ENCODE measurements at regions of chr2 and their contacts with region 1.

Region 1: GRCh38 chr2:69914170-69914960 is 544 bp upstream of the MXD1 start:
- DNase-seq: peak; percentile 100
- H3K4me3 Mint-ChIP-seq: peak overlapping the region; percentile 78
- H3K27ac Mint-ChIP-seq: peak overlapping the region; percentile 46
- H3K4me1 Mint-ChIP-seq: peaks cover 24% of the 10 kb centered on the region
- H3K27me3 Mint-ChIP-seq: no peaks in the 10 kb centered on the region
- CTCF ChIP-seq: no peak

Region 2: GRCh38 chr2:69741619-69742466 is 172.5 kb before region 1 on chr2 and contains the start of gene ANXA4:
- CTCF ChIA-PET with region 1: interaction called, 3 read pairs
- POLR2A ChIA-PET with region 1: interaction called, 19 read pairs
- intact Hi-C with region 1: no loop called
- DNase-seq: peak; percentile 91
- H3K4me3 Mint-ChIP-seq: peak within 1 kb of the TSS; percentile 83
- H3K27ac Mint-ChIP-seq: peak within 1 kb of the TSS; percentile 97
- H3K4me1 Mint-ChIP-seq: peaks cover 14% of the 10 kb centered on the region
- H3K27me3 Mint-ChIP-seq: no peaks in the 10 kb centered on the region
- CTCF ChIP-seq: no peak
- total RNA-seq, gene ANXA4: 79.8 and 82.9 TPM in 2 replicates

Region 3: DNA sequence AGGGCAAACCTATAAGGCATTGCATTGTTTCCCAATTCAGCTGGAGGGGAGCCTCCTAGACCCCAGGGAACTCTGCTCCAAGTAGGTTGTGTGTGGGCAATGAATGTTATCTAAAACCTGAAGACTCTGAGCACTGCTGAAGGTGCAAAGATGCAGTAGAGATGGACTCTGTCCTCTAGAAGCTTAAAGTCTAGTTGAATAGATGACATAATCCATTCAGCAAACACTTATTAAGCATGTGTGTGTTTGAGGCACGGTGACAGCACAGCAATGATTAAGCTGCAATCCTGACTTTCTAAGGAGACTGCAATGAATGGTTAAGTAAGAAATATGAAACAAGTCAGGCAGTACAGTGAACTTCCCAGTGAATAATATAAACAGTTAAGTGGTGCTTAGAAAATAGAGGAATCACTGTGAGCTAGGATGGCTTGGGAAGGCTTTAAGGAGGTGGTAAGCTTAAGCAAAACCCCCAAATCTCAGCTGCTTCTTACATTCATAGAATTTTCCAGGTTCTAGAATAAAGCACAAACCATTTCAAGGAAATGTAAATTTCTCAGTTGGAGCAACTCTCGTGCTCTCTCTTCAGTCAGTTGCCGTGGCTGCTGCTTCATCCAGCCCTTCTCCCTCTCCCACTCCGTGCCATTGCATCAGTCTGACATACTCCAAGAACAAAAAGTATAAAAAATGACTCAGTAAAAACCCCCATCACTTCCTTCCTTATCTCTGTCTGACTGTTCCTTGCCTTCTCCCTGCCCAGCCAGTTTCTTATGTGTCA is 19.7 kb after region 1 on chr2:
- CTCF ChIA-PET with region 1: no interaction called
- POLR2A ChIA-PET with region 1: interaction called, 26 read pairs
- intact Hi-C with region 1: loop called (anchors 2 kb)
- DNase-seq: peak; percentile 65
- H3K4me3 Mint-ChIP-seq: no peak overlapping the region
- H3K27ac Mint-ChIP-seq: peak overlapping the region; percentile 5
- H3K4me1 Mint-ChIP-seq: peaks cover 21% of the 10 kb centered on the region
- H3K27me3 Mint-ChIP-seq: no peaks in the 10 kb centered on the region
- CTCF ChIP-seq: no peak

Region 4: DNA sequence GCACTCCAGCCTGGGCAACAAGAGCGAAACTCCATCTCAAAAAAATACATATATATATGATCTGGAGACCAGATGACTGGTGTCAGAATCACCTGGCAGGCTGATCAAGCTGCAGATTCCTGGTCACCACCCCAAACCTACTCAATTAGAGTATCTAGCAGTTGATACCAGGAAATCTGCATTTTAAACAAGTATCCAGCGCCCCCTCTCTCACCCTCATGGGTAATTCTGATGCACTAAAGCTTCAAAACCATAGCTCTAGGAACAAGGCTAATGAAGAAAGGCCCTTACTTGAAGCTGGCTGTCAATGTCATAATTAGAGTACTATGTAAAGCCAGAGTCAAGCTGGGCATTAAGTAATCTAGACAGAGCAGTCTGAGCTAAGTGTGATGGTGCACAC is 147.9 kb after region 1 on chr2:
- CTCF ChIA-PET with region 1: interaction called, 11 read pairs
- POLR2A ChIA-PET with region 1: interaction called, 191 read pairs
- intact Hi-C with region 1: no loop called
- DNase-seq: peak; percentile 16
- H3K4me3 Mint-ChIP-seq: no peak overlapping the region
- H3K27ac Mint-ChIP-seq: peak overlapping the region; percentile 79
- H3K4me1 Mint-ChIP-seq: no peaks in the 10 kb centered on the region
- H3K27me3 Mint-ChIP-seq: no peaks in the 10 kb centered on the region
- CTCF ChIP-seq: no peak

Region 5: GRCh38 chr2:70132244-70133126 is 218.1 kb after region 1 on chr2:
- CTCF ChIA-PET with region 1: interaction called, 5 read pairs
- POLR2A ChIA-PET with region 1: interaction called, 28 read pairs
- intact Hi-C with region 1: no loop called
- DNase-seq: peak; percentile 43
- H3K4me3 Mint-ChIP-seq: peak overlapping the region; percentile 59
- H3K27ac Mint-ChIP-seq: peak overlapping the region; percentile 90
- H3K4me1 Mint-ChIP-seq: peaks cover 37% of the 10 kb centered on the region
- H3K27me3 Mint-ChIP-seq: no peaks in the 10 kb centered on the region
- CTCF ChIP-seq: no peak

Region 6: DNA sequence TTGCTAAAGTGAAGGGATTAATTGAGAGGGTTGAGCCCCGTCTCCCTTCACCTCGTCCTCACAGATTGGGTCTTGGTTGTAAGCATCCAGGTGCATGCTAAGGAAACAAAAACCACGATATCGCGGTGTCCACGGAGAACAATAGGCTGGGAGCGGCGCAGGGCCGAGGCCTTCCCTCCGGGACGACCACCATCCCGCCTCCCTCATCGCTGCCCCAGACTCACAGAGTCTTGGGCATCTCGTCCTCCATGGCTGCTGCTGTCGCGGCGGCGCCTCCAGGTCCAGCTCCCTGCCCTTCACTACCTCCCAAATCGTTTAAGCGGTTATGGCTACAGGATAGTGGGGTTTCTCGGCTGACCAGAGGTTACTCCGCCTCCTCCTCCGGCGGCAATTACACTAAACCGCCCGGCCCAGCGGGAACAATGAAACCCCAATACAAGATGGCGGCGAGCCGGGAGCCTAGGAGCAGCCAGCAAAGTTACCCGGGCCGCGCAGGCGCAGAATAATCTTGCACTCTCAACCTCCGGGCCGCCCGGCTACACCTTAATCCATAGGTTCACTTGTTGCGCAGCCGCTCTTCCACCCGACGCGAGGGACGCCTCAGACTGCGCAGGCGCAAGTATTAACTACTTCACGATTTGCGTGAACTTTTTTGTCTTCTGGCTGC is 333.9 kb after region 1 on chr2 and contains the start of gene TIA1:
- CTCF ChIA-PET with region 1: no interaction called
- POLR2A ChIA-PET with region 1: interaction called, 19 read pairs
- intact Hi-C with region 1: loop called (anchors 2 kb)
- DNase-seq: peak; percentile 99
- H3K4me3 Mint-ChIP-seq: peak within 1 kb of the TSS; percentile 82
- H3K27ac Mint-ChIP-seq: peak within 1 kb of the TSS; percentile 86
- H3K4me1 Mint-ChIP-seq: peaks cover 15% of the 10 kb centered on the region
- H3K27me3 Mint-ChIP-seq: no peaks in the 10 kb centered on the region
- CTCF ChIP-seq: no peak
- total RNA-seq, gene TIA1: 75.7 and 83.9 TPM in 2 replicates